HCT116 (cell line): ENCODE measurements at regions of chr7 and their contacts with region 1.

Region 1: DNA sequence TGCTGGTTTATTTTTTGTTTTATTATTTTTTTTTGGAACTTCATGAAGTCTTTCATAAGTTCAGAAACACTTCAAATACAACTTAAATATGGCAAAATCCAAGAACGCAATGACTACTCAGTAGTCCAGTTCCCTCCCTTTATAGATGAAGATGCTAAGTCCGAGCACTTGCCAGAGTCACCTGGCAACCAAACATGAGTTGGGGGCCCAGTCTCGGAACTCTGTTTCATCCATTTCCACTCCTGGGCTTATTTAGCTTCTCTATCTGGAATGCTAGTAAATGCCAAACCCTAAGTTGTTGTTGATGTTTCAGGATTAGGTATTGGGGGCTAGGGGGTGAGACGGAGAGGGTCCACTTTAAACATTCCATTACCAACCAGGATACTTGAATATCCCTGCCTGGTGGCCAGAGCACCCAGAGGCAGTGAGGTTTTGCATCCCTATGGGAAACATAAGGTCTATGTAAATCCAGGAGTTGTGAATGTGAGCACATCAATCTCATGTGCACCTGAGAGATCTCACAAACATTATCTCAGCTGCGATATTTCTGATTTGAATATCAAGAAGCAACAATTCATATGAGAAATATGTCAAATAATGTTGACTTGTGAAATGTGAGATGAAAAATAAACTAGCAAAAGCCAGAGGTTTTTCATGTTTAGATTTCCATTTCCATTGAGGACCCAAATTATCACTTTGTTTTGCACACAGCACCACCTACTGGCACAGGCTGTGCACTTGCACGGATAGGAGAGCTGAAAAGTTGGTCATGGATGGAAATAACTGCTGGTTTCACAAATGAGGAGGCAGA is 129.3 kb downstream of the PKD1L1 start:
- DNase-seq: peak; percentile 34
- ATAC-seq: peak; percentile 82
- H3K4me3 ChIP-seq: no peak overlapping the region
- H3K27ac ChIP-seq: no peak overlapping the region
- H3K4me1 ChIP-seq: no peaks in the 10 kb centered on the region
- H3K27me3 ChIP-seq: no peaks in the 10 kb centered on the region
- CTCF ChIP-seq: peak; percentile 81 to 99 (median 96)
- POLR2A ChIP-seq: no peak
- RAD21 ChIP-seq: peak; percentile 93

Region 2: GRCh38 chr7:47435889-47436312 is 383.1 kb before region 1 on chr7:
- CTCF ChIA-PET with region 1: interaction called, 25 read pairs
- POLR2A ChIA-PET with region 1: no interaction called
- RAD21 ChIA-PET with region 1: interaction called in 1 of 2 experiments, 3 read pairs
- intact Hi-C with region 1: no loop called
- DNase-seq: peak; percentile 70
- ATAC-seq: peak; percentile 98
- H3K4me3 ChIP-seq: no peak overlapping the region
- H3K27ac ChIP-seq: no peak overlapping the region
- H3K4me1 ChIP-seq: peaks cover 0 to 5% of the 10 kb centered on the region in 2 experiments; a peak in 2 of 4 replicates
- H3K27me3 ChIP-seq: no peaks in the 10 kb centered on the region
- CTCF ChIP-seq: peak; percentile 69 to 80 (median 75)
- POLR2A ChIP-seq: no peak
- RAD21 ChIP-seq: peak; percentile 89

Region 3: DNA sequence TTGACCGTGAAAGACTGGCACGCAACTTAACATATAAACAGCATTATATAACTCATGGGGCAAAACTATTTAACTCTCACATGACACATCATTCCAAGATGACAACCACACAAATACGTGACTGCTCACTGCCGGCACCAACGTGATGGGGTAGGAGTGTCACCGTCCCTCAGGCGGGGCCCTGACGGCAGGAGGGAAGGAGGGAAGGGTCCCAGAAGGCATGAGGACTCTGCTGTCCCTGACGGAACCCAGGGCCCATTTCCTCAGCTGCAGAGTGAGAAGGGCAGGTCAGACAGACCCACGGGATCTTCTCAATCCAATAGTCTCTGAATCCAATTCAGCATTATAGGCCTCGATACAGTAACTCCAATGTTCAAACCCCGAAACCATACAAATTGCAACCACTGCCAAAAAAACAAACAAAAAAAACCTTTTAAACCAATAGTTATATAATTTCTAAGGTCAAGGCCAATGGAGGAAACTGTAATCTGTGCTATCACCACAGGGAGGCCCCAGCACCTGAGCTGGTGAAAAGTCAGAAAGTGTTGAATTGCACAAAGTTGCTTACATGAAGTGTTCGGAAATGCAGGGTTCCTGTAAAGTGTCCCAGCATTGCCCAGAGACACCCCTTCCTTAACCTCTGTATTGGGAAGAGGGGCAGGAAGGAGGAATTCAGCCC is 374.5 kb before region 1 on chr7:
- CTCF ChIA-PET with region 1: interaction called, 9 read pairs
- POLR2A ChIA-PET with region 1: no interaction called
- RAD21 ChIA-PET with region 1: no interaction called
- intact Hi-C with region 1: loop called (anchors 1 kb)
- DNase-seq: no peak
- ATAC-seq: peak; percentile 76
- H3K4me3 ChIP-seq: no peak overlapping the region
- H3K27ac ChIP-seq: no peak overlapping the region
- H3K4me1 ChIP-seq: peaks cover 7 to 12% of the 10 kb centered on the region in 2 experiments; a peak in 3 of 4 replicates
- H3K27me3 ChIP-seq: no peaks in the 10 kb centered on the region
- CTCF ChIP-seq: peak; percentile 34 to 58 (median 56); a peak in 5 of 6 replicates
- POLR2A ChIP-seq: no peak
- RAD21 ChIP-seq: peak; percentile 76

Region 4: DNA sequence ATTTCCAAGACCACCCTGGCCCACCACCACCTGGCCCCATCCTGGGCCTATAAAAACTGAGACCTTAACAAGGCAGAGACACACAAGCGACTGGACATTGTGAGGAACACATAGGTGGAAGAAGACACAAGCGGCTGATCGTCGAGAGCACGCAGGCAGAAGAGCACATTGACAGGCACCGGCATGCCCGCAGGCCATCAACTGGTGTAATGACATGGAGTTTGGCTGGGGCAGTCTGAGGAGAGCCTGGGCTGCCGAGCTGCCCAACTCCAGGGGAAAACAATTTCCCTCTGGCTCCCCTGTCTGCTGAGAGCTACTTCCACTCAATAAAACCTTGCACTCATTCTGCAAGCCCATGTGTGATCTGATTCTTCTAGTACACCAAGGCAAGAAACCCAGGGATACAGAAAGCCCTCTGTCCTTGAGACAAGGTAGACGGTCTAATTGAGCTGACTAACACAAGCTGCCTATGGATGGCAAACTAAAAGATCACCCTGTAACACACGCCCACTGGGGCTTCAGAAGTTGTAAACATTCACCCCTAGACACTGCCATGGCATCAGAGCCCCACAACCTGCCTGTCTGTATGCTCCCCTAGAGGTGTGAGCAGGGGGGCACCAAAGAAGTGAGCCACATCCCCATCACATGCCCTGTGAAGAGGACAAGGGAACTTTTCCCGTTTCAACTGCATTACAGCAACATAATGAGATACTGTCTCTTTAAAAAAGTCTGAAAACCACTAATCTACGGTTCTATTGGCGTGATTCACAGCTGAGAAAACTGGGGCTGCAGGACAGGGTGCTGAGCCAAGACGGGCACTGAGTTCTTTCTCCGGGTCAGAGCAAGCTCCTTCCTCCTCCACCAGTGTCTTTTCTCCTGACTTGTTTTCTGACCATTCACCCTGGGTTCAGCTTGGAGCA is 218.5 kb before region 1 on chr7:
- CTCF ChIA-PET with region 1: no interaction called
- POLR2A ChIA-PET with region 1: no interaction called
- RAD21 ChIA-PET with region 1: no interaction called
- intact Hi-C with region 1: no loop called
- DNase-seq: no peak
- ATAC-seq: peak; percentile 57
- H3K4me3 ChIP-seq: no peak overlapping the region
- H3K27ac ChIP-seq: no peak overlapping the region
- H3K4me1 ChIP-seq: peaks cover 27 to 34% of the 10 kb centered on the region in 2 experiments
- H3K27me3 ChIP-seq: no peaks in the 10 kb centered on the region
- CTCF ChIP-seq: no peak
- POLR2A ChIP-seq: no peak
- RAD21 ChIP-seq: no peak

Region 5: GRCh38 chr7:47759056-47759706 is 59.8 kb before region 1 on chr7:
- CTCF ChIA-PET with region 1: interaction called, 5 read pairs
- POLR2A ChIA-PET with region 1: no interaction called
- RAD21 ChIA-PET with region 1: interaction called in 1 of 2 experiments, 3 read pairs
- intact Hi-C with region 1: loop called (anchors 1 kb)
- DNase-seq: peak; percentile 10
- ATAC-seq: peak; percentile 53; the same call in 1 of the 2 replicates
- H3K4me3 ChIP-seq: no peak overlapping the region
- H3K27ac ChIP-seq: no peak overlapping the region
- H3K4me1 ChIP-seq: peaks cover 7 to 11% of the 10 kb centered on the region in 2 experiments; a peak in 3 of 4 replicates
- H3K27me3 ChIP-seq: no peaks in the 10 kb centered on the region
- CTCF ChIP-seq: peak; percentile 26 to 35 (median 33); a peak in 4 of 6 replicates
- POLR2A ChIP-seq: no peak
- RAD21 ChIP-seq: peak; percentile 62